ENCODE measurements at regions of chr2 and their contacts with region 1.

Region 1: DNA sequence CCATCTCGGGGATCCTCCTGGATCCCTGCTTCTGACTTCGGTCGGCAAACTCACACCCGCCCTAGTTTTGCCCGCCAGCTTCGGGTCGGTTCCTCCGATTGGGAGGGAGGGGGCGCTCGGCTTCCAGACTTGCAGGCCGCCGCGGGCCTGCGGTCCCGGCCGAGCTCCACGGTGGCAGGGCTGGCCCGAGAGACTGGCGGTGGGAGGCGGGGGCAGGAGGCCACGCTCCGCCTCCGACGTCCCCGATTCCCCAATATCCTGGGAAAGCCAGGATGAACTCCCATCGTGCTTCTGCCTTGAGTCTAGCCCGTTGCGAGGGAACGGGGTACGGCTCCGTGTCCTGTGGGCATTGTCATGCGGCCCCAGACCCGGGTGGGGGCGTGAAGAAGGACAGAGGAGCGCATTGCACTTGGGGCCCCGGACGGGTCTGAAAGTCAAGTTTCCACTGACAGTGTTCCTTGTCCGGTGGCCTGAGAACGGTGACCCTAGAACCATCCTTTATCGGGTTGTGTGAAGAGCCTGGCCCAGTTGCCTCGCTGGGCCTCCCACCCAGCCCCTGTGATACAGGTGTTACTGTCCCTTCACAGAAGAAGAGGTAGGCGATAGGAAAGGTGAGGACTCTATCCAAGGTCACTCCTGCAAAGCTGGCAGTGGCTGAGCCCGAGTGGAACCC is 2.4 kb upstream of the INHBB start:
- DNase-seq: peak; percentile 80 to 91
- ATAC-seq: peak; percentile 66 to 89
- H3K4me3 ChIP-seq: peak overlapping the region; percentile 85
- H3K27ac ChIP-seq: peak overlapping the region; percentile 83 to 93
- H3K4me1 ChIP-seq: peaks cover 27% of the 10 kb centered on the region
- CTCF ChIP-seq: peak; percentile 91
- EP300 ChIP-seq: no peak
- POLR2A ChIP-seq: no peak
- RAD21 ChIP-seq: peak; percentile 96 to 99

Region 2: GRCh38 chr2:120312861-120313694 is 30.5 kb before region 1 on chr2:
- CTCF ChIA-PET with region 1: interaction called, 17 read pairs
- POLR2A ChIA-PET with region 1: no interaction called
- DNase-seq: peak; percentile 44 to 78
- ATAC-seq: peak; percentile 86 to 89
- H3K4me3 ChIP-seq: peak overlapping the region; percentile 35
- H3K27ac ChIP-seq: peak overlapping the region; percentile 33 to 60; a peak in 4 of 6 replicates
- H3K4me1 ChIP-seq: 0 out of 3 replicates have a peak, but pooled peaks cover 3% of the 10 kb centered on the region
- CTCF ChIP-seq: peak; percentile 99
- EP300 ChIP-seq: no peak
- POLR2A ChIP-seq: no peak
- RAD21 ChIP-seq: peak; percentile 96 to 97

Region 3: GRCh38 chr2:120508567-120509041 is 165.0 kb after region 1 on chr2:
- CTCF ChIA-PET with region 1: interaction called, 13 read pairs
- POLR2A ChIA-PET with region 1: no interaction called
- DNase-seq: no peak
- ATAC-seq: no peak
- H3K4me3 ChIP-seq: no peak overlapping the region
- H3K27ac ChIP-seq: no peak overlapping the region
- H3K4me1 ChIP-seq: no peaks in the 10 kb centered on the region
- CTCF ChIP-seq: no peak
- EP300 ChIP-seq: no peak
- POLR2A ChIP-seq: no peak
- RAD21 ChIP-seq: no peak

Region 4: GRCh38 chr2:120552800-120553481 is 209.4 kb after region 1 on chr2:
- CTCF ChIA-PET with region 1: interaction called, 101 read pairs
- POLR2A ChIA-PET with region 1: interaction called, 4 read pairs
- DNase-seq: peak; percentile 78 to 87
- ATAC-seq: peak; percentile 97 to 99
- H3K4me3 ChIP-seq: no peak overlapping the region
- H3K27ac ChIP-seq: peak overlapping the region; percentile 3 to 42; a peak in 2 of 6 replicates
- H3K4me1 ChIP-seq: peaks cover 5% of the 10 kb centered on the region
- CTCF ChIP-seq: peak; percentile 73
- EP300 ChIP-seq: no peak
- POLR2A ChIP-seq: no peak
- RAD21 ChIP-seq: peak; percentile 72 to 77

Region 5: GRCh38 chr2:120680136-120680761 is 336.7 kb after region 1 on chr2:
- CTCF ChIA-PET with region 1: interaction called, 182 read pairs
- POLR2A ChIA-PET with region 1: no interaction called
- DNase-seq: peak; percentile 76 to 91
- ATAC-seq: peak; percentile 71 to 91
- H3K4me3 ChIP-seq: no peak overlapping the region
- H3K27ac ChIP-seq: no peak overlapping the region
- H3K4me1 ChIP-seq: no peaks in the 10 kb centered on the region
- CTCF ChIP-seq: peak; percentile 57
- EP300 ChIP-seq: no peak
- POLR2A ChIP-seq: no peak
- RAD21 ChIP-seq: peak; percentile 90 to 94

Measured in A549 (cell line).